WTC11 (cell line): ENCODE measurements at regions of chr11 and their contacts with region 1.

Region 1: DNA sequence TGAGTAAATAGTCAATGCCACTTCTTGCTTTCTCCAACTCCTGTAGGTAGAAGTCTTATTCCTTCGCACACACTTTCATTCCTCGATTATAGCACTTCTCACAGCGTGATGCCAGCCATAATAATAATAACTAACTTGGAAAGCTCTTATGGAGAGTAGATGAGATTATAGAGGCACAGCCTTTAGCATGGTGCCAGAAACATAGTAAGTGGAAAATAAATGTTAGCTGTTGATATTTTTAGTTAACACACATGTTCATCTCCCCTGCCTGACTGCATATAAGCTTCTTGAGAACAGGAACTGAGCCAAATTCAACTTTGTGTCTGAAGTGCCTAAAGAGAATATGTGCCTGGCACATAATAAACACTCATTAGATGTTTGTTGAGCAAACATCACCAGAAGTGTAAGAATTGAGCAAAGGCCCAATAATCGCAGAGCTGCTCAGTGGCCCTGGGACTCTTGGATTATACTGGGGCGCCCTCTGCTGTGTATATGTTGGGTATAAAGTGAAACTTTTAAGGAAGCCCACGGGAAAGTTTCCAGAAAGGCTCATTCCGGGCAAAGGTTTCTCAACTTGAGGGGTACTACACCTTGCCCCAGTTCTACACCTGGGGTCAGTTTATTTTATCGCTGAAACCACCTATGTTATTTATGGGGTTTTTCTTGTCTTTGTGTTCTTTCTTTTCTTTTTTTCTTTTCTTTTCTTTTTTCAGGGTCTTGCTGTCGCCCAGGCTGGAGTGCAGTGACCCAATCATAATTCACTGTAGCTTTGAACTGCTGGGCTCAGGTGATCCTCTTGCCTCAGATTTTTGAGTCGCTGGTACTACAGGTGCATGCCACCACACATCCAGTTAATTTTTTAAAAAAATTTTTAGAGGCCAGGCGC is 22.3 kb downstream of the SLN start:
- DNase-seq: peak; percentile 73
- ATAC-seq: peak; percentile 95
- H3K4me3 Mint-ChIP-seq: no peak overlapping the region
- H3K27ac Mint-ChIP-seq: no peak overlapping the region
- H3K4me1 Mint-ChIP-seq: no peaks in the 10 kb centered on the region
- H3K27me3 Mint-ChIP-seq: no peaks in the 10 kb centered on the region; the same call in 1 of the 2 replicates
- CTCF ChIP-seq: peak; percentile 54

Region 2: DNA sequence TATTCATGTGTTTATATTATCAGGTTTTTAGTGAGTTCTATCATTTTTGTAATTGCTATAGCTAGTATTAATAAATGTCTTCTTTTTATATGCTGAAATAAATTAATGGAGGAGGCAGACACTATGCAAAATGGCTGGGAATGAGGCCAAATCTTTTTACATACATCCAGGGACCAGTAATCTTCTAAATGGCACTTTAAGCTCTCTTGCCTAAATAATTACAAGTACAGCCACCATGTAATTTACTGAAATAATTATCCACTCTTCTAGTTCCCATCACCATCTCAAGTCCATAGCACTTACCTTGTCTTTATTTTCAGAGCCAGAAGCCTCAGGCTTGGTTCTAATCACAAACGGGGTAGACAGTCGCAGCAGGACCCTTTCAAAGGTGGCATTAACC is 750.4 kb before region 1 on chr11:
- CTCF ChIA-PET with region 1: no interaction called
- POLR2A ChIA-PET with region 1: no interaction called
- DNase-seq: no peak
- ATAC-seq: no peak
- H3K4me3 Mint-ChIP-seq: no peak overlapping the region
- H3K27ac Mint-ChIP-seq: no peak overlapping the region
- H3K4me1 Mint-ChIP-seq: peaks cover 19% of the 10 kb centered on the region
- H3K27me3 Mint-ChIP-seq: no peaks in the 10 kb centered on the region
- CTCF ChIP-seq: no peak

Region 3: GRCh38 chr11:107549253-107549953 is 140.2 kb before region 1 on chr11:
- CTCF ChIA-PET with region 1: interaction called, 13 read pairs
- POLR2A ChIA-PET with region 1: no interaction called
- DNase-seq: no peak
- ATAC-seq: no peak
- H3K4me3 Mint-ChIP-seq: no peak overlapping the region
- H3K27ac Mint-ChIP-seq: no peak overlapping the region
- H3K4me1 Mint-ChIP-seq: no peaks in the 10 kb centered on the region
- H3K27me3 Mint-ChIP-seq: no peaks in the 10 kb centered on the region
- CTCF ChIP-seq: peak; percentile 53

Region 4: GRCh38 chr11:107573438-107573837 is 116.1 kb before region 1 on chr11:
- CTCF ChIA-PET with region 1: interaction called, 29 read pairs
- POLR2A ChIA-PET with region 1: no interaction called
- DNase-seq: no peak
- ATAC-seq: no peak
- H3K4me3 Mint-ChIP-seq: no peak overlapping the region
- H3K27ac Mint-ChIP-seq: no peak overlapping the region
- H3K4me1 Mint-ChIP-seq: peaks cover 20% of the 10 kb centered on the region
- H3K27me3 Mint-ChIP-seq: no peaks in the 10 kb centered on the region
- CTCF ChIP-seq: no peak

Region 5: DNA sequence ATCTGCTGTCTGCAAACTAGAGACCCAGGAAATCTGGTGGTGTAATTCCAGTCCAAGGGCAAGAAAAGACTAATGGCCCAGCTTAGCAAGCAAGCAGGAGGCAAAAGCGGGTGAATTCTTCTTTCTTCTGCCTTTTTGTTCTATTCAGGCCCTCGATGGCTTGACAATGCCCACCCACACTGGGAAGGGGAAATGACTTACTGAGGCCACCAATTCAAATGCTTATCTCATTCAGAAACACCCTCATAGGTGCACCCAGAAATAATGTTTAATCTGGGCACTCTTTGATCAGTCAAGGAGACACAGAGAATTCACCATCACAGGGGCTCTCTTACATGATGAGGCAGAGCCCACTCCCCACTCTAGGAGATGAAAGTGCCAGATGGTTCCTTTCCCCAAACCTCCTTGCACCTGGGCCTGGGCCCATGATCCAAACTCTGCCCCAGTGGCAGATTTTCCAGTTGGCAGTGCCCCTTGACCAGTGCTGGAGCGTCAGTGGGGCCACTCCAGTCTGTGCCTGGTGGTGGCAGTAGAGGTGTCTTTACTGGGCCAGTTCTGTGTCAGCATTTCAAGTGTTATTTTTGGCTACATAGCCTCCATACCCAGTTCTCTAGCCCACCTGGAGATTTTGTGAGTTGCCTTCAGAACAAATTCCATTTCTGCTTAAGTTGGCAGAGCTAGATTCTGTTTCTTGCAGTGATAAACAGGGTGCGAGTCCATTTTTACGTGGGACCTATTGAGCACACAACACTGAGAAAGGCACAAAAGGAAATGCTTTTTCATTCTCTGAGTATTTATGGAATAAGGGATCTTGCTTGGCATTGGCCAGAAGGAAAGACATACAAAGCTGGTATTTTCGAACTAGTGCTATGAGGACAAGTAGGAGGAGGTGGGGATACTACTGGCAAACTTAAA is 91.1 kb before region 1 on chr11:
- CTCF ChIA-PET with region 1: interaction called, 14 read pairs
- POLR2A ChIA-PET with region 1: no interaction called
- DNase-seq: peak; percentile 64
- ATAC-seq: peak; percentile 97
- H3K4me3 Mint-ChIP-seq: no peak overlapping the region
- H3K27ac Mint-ChIP-seq: no peak overlapping the region
- H3K4me1 Mint-ChIP-seq: peaks cover 48% of the 10 kb centered on the region
- H3K27me3 Mint-ChIP-seq: peaks cover 13% of the 10 kb centered on the region
- CTCF ChIP-seq: peak; percentile 43; the same call in 1 of the 2 replicates

Region 6: DNA sequence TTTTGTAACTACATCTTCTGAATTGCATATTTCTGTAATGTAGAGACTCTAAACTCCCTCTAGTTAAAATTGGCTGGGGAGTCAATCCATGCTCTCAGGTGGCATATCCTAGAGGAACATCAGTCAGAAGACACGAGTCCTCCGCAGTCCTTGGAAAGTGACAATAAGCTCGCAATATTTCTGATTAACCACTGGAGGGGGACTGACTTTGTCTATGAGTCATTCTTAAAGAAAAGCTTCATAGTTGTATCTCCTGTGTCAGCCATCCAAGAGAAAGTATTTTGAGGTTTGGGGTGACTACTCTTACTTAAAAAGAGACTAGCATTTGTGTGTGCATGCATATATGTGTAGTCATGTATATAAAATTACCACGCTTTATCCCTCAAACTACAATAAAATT is 37.9 kb before region 1 on chr11:
- CTCF ChIA-PET with region 1: interaction called, 11 read pairs
- POLR2A ChIA-PET with region 1: interaction called, 3 read pairs
- DNase-seq: no peak
- ATAC-seq: peak; percentile 36; the same call in 1 of the 2 replicates
- H3K4me3 Mint-ChIP-seq: no peak overlapping the region
- H3K27ac Mint-ChIP-seq: no peak overlapping the region
- H3K4me1 Mint-ChIP-seq: peaks cover 53% of the 10 kb centered on the region
- H3K27me3 Mint-ChIP-seq: no peaks in the 10 kb centered on the region
- CTCF ChIP-seq: no peak